Vagina (tissue), 2 donors: ENCODE measurements at regions of chr2 and their contacts with region 1.

Region 1: DNA sequence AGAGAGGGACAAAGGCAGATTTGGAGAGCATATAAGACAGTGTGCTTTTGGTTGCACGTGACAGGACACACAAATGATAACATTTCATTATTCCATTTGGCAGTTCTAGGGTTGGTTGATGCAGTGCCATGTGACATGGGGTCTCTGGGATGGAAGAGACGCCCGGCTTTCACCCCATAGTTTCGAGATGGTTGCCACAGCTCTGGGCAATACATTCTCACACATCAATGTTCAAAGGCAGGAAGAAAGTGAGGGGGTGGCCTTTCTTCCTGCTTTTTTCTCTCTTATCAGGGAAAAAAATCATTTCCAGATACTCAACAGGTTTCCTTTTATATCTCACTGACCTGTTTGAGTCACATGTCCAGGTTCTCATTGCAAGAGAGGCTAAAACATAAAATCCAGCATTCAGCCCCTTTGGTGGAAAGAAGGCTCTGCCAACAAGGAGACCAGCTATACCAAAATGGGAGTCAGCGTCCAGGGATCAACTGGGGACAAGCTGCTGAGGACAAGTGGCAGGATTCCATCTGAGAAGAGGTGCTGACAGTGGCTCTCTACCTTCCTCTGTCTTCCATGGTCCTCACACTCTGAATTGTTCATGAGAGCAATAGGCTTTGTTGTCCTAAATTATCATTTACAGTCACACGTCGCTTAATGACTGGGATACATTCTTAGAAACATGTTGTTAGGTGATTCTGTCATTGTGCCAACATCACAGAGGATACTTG is 29.1 kb upstream of the ANKRD44 start:
- DNase-seq: no peak
- H3K4me3 ChIP-seq: no peak overlapping the region
- H3K27ac ChIP-seq: no peak overlapping the region
- H3K4me1 ChIP-seq: no peaks in the 10 kb centered on the region
- H3K27me3 ChIP-seq: no peaks in the 10 kb centered on the region
- CTCF ChIP-seq: no peak
- POLR2A ChIP-seq: no peak

Region 2: DNA sequence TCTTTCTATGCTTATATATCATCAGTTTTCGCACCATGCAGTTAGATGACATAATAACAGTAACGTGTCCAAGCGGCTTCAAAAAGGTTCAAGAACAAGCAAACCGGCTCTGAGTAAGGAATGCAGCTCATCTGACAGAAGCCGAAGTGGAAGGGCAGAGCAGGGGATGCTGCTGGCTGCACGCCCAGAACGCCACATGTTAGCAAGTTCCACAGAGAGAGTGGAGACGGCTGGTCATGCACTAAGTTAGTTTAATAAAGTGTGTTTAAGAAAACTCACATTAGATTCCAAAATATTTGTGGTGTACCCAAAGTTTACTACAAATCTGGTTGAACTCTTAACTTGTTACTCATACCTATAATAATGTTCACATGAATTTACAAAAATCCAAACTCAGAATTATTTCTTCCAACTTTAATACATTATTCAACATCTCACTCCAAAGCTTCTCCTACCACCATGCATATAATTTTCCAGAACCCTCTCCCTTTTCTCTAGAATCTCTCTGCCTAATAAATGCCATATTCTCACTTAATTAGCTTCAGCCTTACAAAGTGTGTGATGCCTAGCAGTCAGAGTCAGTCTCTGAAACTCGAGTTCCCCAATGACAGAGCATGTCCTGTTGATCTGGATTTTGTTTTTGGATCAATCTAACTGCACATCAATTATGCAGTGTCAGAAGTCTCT is 1441.0 kb before region 1 on chr2:
- intact Hi-C with region 1: loop called (anchors 10 kb)
- DNase-seq: no peak
- H3K4me3 ChIP-seq: no peak overlapping the region
- H3K27ac ChIP-seq: no peak overlapping the region
- H3K4me1 ChIP-seq: no peaks in the 10 kb centered on the region
- H3K27me3 ChIP-seq: no peaks in the 10 kb centered on the region
- CTCF ChIP-seq: no peak
- POLR2A ChIP-seq: no peak

Region 3: GRCh38 chr2:197286805-197287598 is 52.7 kb before region 1 on chr2:
- intact Hi-C with region 1: no loop called
- DNase-seq: no peak
- H3K4me3 ChIP-seq: no peak overlapping the region
- H3K27ac ChIP-seq: peak overlapping the region; percentile 69
- H3K4me1 ChIP-seq: peaks cover 22% of the 10 kb centered on the region
- H3K27me3 ChIP-seq: no peaks in the 10 kb centered on the region
- CTCF ChIP-seq: no peak
- POLR2A ChIP-seq: no peak

Region 4: DNA sequence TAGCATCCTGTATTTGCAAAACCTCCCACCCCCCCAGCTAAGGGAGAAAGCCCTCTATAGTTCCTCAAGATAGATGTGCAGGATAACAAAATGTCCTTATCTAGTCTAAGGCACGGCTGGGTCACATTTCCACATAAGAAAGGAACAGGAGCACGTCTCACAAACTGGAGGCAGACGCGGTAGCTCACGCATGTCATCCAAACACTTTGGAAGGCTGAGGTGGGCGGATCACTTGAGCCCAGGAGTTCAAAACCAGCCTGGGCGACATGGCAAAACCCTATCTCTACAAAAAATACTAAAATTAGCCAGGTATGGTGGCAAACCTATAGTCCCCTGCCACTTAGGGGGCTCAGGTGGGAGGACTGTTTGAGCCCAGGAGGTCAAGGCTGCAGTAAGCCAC is 85.9 kb after region 1 on chr2:
- intact Hi-C with region 1: no loop called
- DNase-seq: no peak
- H3K4me3 ChIP-seq: no peak overlapping the region
- H3K27ac ChIP-seq: no peak overlapping the region
- H3K4me1 ChIP-seq: peaks cover 76% of the 10 kb centered on the region
- H3K27me3 ChIP-seq: no peaks in the 10 kb centered on the region
- CTCF ChIP-seq: no peak
- POLR2A ChIP-seq: no peak